ENCODE measurements at regions of chr17 and their contacts with region 1.

Region 1: GRCh38 chr17:48307814-48308411 is 122.1 kb downstream of the SKAP1 start:
- DNase-seq: peak; percentile 58 to 78
- ATAC-seq: peak; percentile 96 to 98
- H3K4me3 ChIP-seq: no peak overlapping the region
- H3K27ac ChIP-seq: no peak overlapping the region
- H3K4me1 ChIP-seq: no peaks in the 10 kb centered on the region
- CTCF ChIP-seq: peak; percentile 89
- EP300 ChIP-seq: no peak
- POLR2A ChIP-seq: no peak
- RAD21 ChIP-seq: peak; percentile 69 to 76

Region 2: DNA sequence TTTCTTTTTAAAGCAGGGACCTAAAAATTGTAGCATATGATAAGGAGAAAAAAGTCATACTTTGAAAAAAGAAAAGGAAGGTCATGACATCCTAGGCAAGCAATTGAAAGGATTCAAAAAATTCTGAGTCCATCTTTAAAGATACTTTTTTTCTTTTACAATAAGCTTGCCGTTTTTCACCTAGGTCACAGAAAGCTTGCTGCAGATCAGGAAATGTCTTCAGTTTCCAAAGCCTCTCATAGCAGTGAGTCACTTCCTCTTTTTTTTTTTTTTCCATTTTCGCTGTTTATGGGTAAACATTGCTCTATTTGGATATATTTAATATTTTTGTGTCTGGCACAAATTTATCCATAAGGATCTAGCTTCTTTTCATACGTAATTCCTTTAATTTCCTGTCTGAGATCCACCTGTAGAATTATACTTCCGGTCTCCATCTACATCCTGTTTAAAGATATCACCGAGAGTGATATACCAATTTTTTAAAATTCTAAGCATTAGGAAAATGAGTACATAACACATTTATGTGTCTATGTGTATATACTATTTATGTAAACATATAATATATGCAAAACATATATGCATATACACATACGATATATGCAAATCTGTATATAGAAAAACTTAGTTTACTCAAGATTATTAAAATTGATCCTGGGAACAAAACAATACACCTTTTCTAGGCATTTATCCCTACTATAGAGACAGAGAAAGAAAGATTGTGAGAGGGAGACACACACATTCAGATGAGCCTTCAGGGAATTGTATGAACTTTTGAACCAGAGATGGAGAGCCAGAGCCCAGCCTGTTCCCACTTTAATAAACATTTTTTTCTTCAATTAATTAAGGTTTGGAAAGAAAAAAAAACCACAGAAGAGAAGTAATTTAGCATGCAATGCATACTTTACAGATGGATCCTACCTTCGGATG is 12.3 kb before region 1 on chr17:
- CTCF ChIA-PET with region 1: interaction called, 20 read pairs
- POLR2A ChIA-PET with region 1: no interaction called
- DNase-seq: peak in 1 of 2 experiments; percentile 35
- ATAC-seq: peak in 1 of 2 experiments; percentile 45; a peak in 1 of 6 replicates
- H3K4me3 ChIP-seq: no peak overlapping the region
- H3K27ac ChIP-seq: peak overlapping the region; percentile 8 to 34; a peak in 5 of 6 replicates
- H3K4me1 ChIP-seq: peaks cover 23% of the 10 kb centered on the region
- CTCF ChIP-seq: no peak
- EP300 ChIP-seq: no peak
- POLR2A ChIP-seq: no peak
- RAD21 ChIP-seq: no peak

Region 3: DNA sequence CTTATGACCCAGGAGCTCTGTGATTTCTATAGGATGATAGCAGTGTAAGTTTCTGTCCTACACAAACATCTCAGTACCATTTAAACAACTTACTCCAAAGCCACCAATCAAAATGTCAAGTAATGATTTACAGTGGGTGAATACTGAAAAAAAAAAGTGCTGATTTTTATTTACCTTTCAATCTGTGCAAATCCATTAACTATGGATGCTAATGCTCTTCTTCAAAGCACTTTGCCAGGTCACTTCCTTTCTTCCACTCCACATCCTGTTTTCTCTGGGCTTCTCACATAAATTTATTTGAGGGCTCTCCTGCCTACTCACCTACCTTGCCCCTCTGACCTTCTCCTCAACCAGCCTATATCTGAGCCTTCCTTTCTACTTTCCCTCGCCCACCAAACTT is 20.5 kb after region 1 on chr17:
- CTCF ChIA-PET with region 1: interaction called, 24 read pairs
- POLR2A ChIA-PET with region 1: no interaction called
- DNase-seq: peak in 1 of 2 experiments; percentile 23
- ATAC-seq: no peak
- H3K4me3 ChIP-seq: no peak overlapping the region
- H3K27ac ChIP-seq: no peak overlapping the region
- H3K4me1 ChIP-seq: peaks cover 18% of the 10 kb centered on the region
- CTCF ChIP-seq: no peak
- EP300 ChIP-seq: no peak
- POLR2A ChIP-seq: no peak
- RAD21 ChIP-seq: no peak

Region 4: DNA sequence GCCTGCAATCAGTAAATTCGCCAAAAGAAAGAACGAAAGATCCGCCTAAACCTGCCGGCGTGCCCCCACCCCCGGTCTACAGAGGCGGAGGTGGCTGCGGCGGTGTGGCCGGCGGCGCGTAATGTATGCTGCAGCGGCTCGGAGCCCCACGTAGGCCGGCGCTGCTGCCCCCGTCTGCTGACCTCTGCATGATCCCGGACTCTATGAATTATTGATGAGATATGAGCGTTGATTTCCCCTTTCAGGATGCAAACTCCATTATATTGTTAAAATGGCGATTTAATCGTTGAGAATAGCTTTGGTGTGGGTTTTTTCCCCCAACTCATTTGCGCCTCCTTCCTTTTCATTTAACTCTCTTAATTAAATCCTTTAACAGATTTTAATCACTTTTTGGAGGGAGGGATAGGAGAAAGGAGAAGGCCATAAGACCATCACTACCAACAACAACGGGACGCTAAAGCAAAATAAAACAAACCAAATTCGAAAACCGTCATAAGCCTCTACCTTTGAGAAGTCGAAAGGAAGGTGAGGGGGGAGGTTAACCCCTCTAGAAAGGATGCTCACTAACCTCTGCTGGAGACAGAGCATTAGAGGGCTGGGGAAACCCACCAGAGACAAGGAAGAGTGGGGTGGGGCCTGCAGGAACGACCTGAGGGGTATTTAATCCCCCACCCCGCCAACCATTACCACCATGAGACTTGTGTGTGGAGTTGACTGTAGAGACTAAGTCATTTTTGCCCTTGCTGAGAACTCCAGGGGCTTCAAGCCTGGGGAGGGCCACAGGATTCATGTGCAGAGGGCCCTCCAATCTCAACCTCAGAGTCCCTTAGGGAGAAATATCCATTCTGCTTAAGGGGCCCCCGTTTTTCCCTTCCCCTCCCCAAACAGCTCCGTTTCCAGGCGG is 278.7 kb after region 1 on chr17:
- CTCF ChIA-PET with region 1: interaction called, 19 read pairs
- POLR2A ChIA-PET with region 1: no interaction called
- DNase-seq: no peak
- ATAC-seq: no peak
- H3K4me3 ChIP-seq: no peak overlapping the region; the same call in 2 of the 3 replicates
- H3K27ac ChIP-seq: peak overlapping the region; percentile 71 to 86; a peak in 5 of 6 replicates
- H3K4me1 ChIP-seq: peaks cover 21% of the 10 kb centered on the region
- CTCF ChIP-seq: no peak
- EP300 ChIP-seq: no peak
- POLR2A ChIP-seq: no peak
- RAD21 ChIP-seq: no peak

Region 5: GRCh38 chr17:48618256-48618897 is 310.5 kb after region 1 on chr17:
- CTCF ChIA-PET with region 1: interaction called, 37 read pairs
- POLR2A ChIA-PET with region 1: no interaction called
- DNase-seq: peak; percentile 86 to 97
- ATAC-seq: peak; percentile 74 to 78
- H3K4me3 ChIP-seq: no peak overlapping the region
- H3K27ac ChIP-seq: no peak overlapping the region
- H3K4me1 ChIP-seq: peaks cover 12% of the 10 kb centered on the region
- CTCF ChIP-seq: peak; percentile 99
- EP300 ChIP-seq: no peak
- POLR2A ChIP-seq: no peak
- RAD21 ChIP-seq: peak; percentile 97 to 99